Activated CD4-positive, alpha-beta T cell treated with anti-CD3 and anti-CD28 coated beads, Interleukin-2, amount 10 ng/mL, durations not matched to agents 7 days and 5 days (primary cell): ENCODE measurements at regions of chr10 and their contacts with region 1.

Region 1: GRCh38 chr10:86960003-86960862 is 1.8 kb downstream of the SNCG start:
- DNase-seq: peak; percentile 42
- H3K4me3 Mint-ChIP-seq: no peak overlapping the region
- H3K27ac Mint-ChIP-seq: no peak overlapping the region
- H3K4me1 Mint-ChIP-seq: peaks cover 3% of the 10 kb centered on the region
- H3K27me3 Mint-ChIP-seq: no peaks in the 10 kb centered on the region

Region 2: DNA sequence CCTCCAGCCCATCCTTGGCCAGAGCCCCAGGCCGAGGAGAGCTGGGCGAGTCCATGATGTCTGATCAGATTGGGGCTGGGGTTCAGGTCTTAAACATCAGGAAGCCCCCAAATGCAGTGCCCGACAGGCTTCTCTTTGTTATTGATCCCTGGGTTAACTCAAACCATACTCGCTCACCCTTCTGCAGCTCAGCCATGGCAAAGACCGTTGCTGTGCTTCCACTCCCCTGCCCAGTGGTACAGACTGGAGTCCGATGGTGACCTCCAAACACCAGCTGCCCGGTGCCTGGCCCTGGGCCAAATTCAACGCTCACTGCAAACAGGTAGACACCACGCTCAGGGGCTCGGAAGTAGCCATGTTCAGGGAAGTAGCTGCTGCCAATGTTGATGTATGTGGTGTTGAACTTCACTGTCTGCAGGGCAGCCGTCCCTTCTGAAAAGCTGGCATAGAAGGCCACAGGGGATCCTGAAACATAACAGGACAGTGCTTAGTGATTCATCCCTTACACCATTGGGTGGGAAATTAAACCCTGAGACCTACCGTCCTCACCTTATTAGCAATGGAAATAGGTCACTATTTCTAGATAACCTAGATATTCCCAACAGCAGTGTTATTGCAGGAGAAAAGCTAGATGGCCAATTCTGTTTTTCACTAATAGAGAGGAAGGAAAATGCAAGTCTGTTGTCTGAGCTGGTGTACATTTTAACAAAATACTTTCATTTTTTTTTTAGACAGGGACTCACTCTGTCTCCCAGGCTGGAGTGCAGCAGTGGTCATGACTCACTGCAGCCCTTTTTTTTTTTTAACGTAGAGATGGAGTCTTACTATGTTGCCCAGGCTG is 23.4 kb before region 1 on chr10:
- CTCF ChIA-PET with region 1: interaction called, 14 read pairs
- POLR2A ChIA-PET with region 1: no interaction called
- DNase-seq: no peak
- H3K4me3 Mint-ChIP-seq: no peak overlapping the region
- H3K27ac Mint-ChIP-seq: no peak overlapping the region
- H3K4me1 Mint-ChIP-seq: peaks cover 1% of the 10 kb centered on the region
- H3K27me3 Mint-ChIP-seq: peaks cover 1% of the 10 kb centered on the region

Region 3: GRCh38 chr10:87054373-87055295 is 94.4 kb after region 1 on chr10:
- CTCF ChIA-PET with region 1: no interaction called
- POLR2A ChIA-PET with region 1: no interaction called
- DNase-seq: no peak
- H3K4me3 Mint-ChIP-seq: no peak overlapping the region
- H3K27ac Mint-ChIP-seq: no peak overlapping the region
- H3K4me1 Mint-ChIP-seq: no peaks in the 10 kb centered on the region
- H3K27me3 Mint-ChIP-seq: no peaks in the 10 kb centered on the region